ENCODE measurements at regions of chr1 and their contacts with region 1.

Region 1: GRCh38 chr1:113904674-113905434 is at the starts of genes AP4B1 and DCLRE1B:
- DNase-seq: peak; percentile 100
- ATAC-seq: peak; percentile 99
- H3K4me3 ChIP-seq: peak within 1 kb of the TSS; percentile 44 to 76
- H3K27ac ChIP-seq: peak within 1 kb of the TSS; percentile 45 to 97
- H3K4me1 ChIP-seq: peaks cover 0 to 4% of the 10 kb centered on the region in 2 donors
- H3K27me3 ChIP-seq: no peaks in the 10 kb centered on the region
- total RNA-seq, gene AP4B1: 15.7 to 24.8 TPM
- total RNA-seq, gene DCLRE1B: 4.2 to 6.3 TPM

Region 2: GRCh38 chr1:113818578-113818977 is 86.3 kb before region 1 on chr1:
- intact Hi-C with region 1: loop called in 1 of 2 experiments (anchors 5 kb)
- DNase-seq: no peak
- ATAC-seq: no peak
- H3K4me3 ChIP-seq: no peak overlapping the region
- H3K27ac ChIP-seq: no peak overlapping the region
- H3K4me1 ChIP-seq: no peaks in the 10 kb centered on the region
- H3K27me3 ChIP-seq: no peaks in the 10 kb centered on the region

Measured in aorta (tissue), 5 donors.